Activated B cell treated with CpG ODN at 0.5 μM for 24 hours (primary cell): ENCODE measurements at regions of chr2 and their contacts with region 1.

Region 1: GRCh38 chr2:31219131-31219969 is 2.0 kb upstream of the CAPN14 start:
- DNase-seq: peak; percentile 41
- ATAC-seq: peak; percentile 81
- H3K4me3 Mint-ChIP-seq: peak overlapping the region; percentile 79
- H3K27ac Mint-ChIP-seq: peak overlapping the region; percentile 99
- H3K4me1 Mint-ChIP-seq: peaks cover 97% of the 10 kb centered on the region
- H3K27me3 Mint-ChIP-seq: no peaks in the 10 kb centered on the region
- CTCF ChIP-seq: no peak

Region 2: DNA sequence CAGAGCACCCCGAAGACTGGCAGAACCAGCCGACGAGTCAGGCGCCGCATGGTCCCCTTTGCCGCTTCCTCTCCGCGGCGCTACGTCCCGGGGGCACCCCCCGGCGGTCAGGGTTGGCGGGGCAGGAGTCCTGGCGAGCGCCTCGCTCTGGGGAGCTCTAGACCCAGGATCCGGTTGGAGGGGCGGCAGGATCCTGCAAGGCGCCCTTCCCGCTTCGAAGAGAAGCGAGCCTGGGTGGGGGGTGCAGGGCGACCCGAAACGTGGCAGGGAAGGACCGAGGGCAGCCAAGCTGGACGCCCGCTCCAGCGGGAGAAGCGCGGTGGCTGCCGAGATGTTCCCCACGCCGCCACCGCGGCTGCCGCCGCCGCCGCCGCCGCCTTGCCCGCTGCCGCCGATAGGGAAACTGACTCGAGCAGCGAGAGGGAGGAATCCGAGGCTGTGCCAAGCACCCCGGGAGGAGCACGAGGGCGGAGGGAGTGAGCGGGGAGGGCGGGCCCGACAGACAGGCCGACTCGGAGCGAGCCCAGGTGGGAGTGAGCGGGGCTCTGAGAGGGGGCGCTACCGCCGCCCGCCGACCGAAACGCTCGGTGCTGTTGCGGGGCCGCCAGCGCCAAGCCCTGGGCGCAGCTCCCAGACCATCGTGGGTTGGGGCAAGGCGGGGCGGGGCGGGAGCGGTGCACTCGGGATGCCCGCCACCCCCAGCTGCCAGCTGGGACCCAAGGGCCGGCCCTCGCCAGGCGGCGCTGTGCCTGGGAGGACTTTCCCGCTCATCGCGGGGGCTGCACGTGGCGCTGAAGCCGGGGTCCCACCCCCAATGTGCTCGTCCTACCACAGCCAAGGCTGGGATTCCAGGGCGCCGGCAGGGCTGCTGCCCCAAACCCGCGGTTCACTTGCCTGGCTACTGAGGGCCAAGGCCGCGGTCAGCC is 81.0 kb before region 1 on chr2 and contains the start of gene GALNT14:
- CTCF ChIA-PET with region 1: no interaction called
- POLR2A ChIA-PET with region 1: no interaction called
- intact Hi-C with region 1: loop called (anchors 5 kb)
- DNase-seq: peak; percentile 64
- ATAC-seq: peak; percentile 76
- H3K4me3 Mint-ChIP-seq: peak within 1 kb of the TSS; percentile 85
- H3K27ac Mint-ChIP-seq: no peak within 1 kb of the TSS
- H3K4me1 Mint-ChIP-seq: peaks cover 8% of the 10 kb centered on the region
- H3K27me3 Mint-ChIP-seq: peaks cover 5% of the 10 kb centered on the region
- CTCF ChIP-seq: no peak
- total RNA-seq, gene GALNT14: 6.6 and 7.9 TPM in 2 replicates

Region 3: GRCh38 chr2:31207790-31208189 is 11.6 kb before region 1 on chr2:
- CTCF ChIA-PET with region 1: no interaction called
- POLR2A ChIA-PET with region 1: interaction called, 3 read pairs
- intact Hi-C with region 1: loop called (anchors 1 kb)
- DNase-seq: no peak
- ATAC-seq: peak; percentile 49
- H3K4me3 Mint-ChIP-seq: peak overlapping the region; percentile 15
- H3K27ac Mint-ChIP-seq: no peak overlapping the region
- H3K4me1 Mint-ChIP-seq: peaks cover 20% of the 10 kb centered on the region
- H3K27me3 Mint-ChIP-seq: no peaks in the 10 kb centered on the region
- CTCF ChIP-seq: no peak

Region 4: GRCh38 chr2:31233741-31234682 is 14.7 kb after region 1 on chr2 and contains the start of gene EHD3:
- CTCF ChIA-PET with region 1: interaction called, 6 read pairs
- POLR2A ChIA-PET with region 1: interaction called, 31 read pairs
- intact Hi-C with region 1: loop called (anchors 1 kb)
- DNase-seq: peak; percentile 85
- ATAC-seq: peak; percentile 98
- H3K4me3 Mint-ChIP-seq: peak within 1 kb of the TSS; percentile 85
- H3K27ac Mint-ChIP-seq: peak within 1 kb of the TSS; percentile 82
- H3K4me1 Mint-ChIP-seq: peaks cover 44% of the 10 kb centered on the region
- H3K27me3 Mint-ChIP-seq: no peaks in the 10 kb centered on the region
- CTCF ChIP-seq: no peak
- total RNA-seq, gene EHD3: 38.1 and 40.3 TPM in 2 replicates

Region 5: GRCh38 chr2:31318361-31319336 is 99.3 kb after region 1 on chr2:
- CTCF ChIA-PET with region 1: no interaction called
- POLR2A ChIA-PET with region 1: interaction called, 8 read pairs
- intact Hi-C with region 1: loop called (anchors 1 kb)
- DNase-seq: peak; percentile 60
- ATAC-seq: peak; percentile 97
- H3K4me3 Mint-ChIP-seq: peak overlapping the region; percentile 66
- H3K27ac Mint-ChIP-seq: peak overlapping the region; percentile 83
- H3K4me1 Mint-ChIP-seq: peaks cover 51% of the 10 kb centered on the region
- H3K27me3 Mint-ChIP-seq: no peaks in the 10 kb centered on the region
- CTCF ChIP-seq: no peak